ENCODE measurements at regions of chr11 and their contacts with region 1.

Region 1: GRCh38 chr11:57499413-57499982 is 16.0 kb downstream of the SLC43A1 start:
- DNase-seq: peak; percentile 99
- H3K4me3 ChIP-seq: peak overlapping the region; percentile 9 to 43 (median 34)
- H3K27ac ChIP-seq: peak overlapping the region; percentile 77 to 80 (median 80)
- H3K4me1 ChIP-seq: peaks cover 0 to 23% (median 19%) of the 10 kb centered on the region in 4 donors
- H3K27me3 ChIP-seq: no peaks in the 10 kb centered on the region
- CTCF ChIP-seq: no peak
- EP300 ChIP-seq: peak in 1 of 4 donors; percentile 56
- POLR2A ChIP-seq: no peak

Region 2: GRCh38 chr11:57456960-57457642 is 42.4 kb before region 1 on chr11:
- intact Hi-C with region 1: loop called (anchors 5 kb)
- DNase-seq: peak; percentile 94
- H3K4me3 ChIP-seq: no peak overlapping the region
- H3K27ac ChIP-seq: no peak overlapping the region
- H3K4me1 ChIP-seq: peaks cover 0 to 45% (median 42%) of the 10 kb centered on the region in 4 donors
- H3K27me3 ChIP-seq: peaks cover 34 to 60% (median 38%) of the 10 kb centered on the region in 3 donors
- CTCF ChIP-seq: peak; percentile 87 to 99 (median 92)
- EP300 ChIP-seq: no peak
- POLR2A ChIP-seq: no peak

Region 3: DNA sequence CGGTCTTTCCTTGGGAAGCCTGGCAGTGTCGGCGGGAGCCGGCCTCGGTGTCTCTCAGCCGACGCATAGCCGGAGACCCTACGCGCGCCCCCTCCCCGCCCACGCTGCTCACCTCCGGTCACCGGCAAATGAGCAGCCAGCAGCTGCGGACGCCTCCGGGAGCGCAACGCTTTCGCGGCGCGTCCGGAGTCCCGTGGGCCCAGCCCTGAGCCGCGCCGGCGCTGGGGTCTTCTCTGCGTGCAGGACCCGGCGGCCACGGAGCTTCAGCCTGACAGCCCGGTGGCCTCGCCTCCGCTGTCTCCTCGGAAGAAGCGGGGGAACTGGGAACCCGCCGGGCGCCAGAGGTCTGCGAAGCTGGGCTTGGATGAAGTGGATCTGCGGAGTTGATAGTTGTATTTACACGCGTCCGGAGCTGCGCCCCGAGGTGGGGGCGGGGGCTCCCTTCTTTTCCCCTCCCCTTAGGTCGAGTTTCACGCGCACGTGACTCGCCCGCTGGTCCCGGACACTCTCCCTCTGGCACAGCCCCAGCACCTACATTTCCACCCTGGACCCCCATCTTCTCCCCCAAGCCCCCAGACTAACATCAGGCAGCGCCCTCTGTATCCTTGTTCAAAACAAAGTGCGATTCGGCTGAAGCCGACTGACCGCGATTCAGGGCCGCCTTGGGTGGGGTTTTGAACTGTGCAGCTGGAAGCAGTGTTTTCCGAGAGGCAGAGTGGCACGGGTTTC is 16.0 kb after region 1 on chr11 and contains the start of gene SLC43A1:
- intact Hi-C with region 1: loop called (anchors 2 kb)
- DNase-seq: peak; percentile 86
- H3K4me3 ChIP-seq: peak within 1 kb of the TSS; percentile 65 to 82 (median 75)
- H3K27ac ChIP-seq: peak within 1 kb of the TSS; percentile 68 to 79 (median 76)
- H3K4me1 ChIP-seq: peaks cover 0 to 18% (median 17%) of the 10 kb centered on the region in 4 donors
- H3K27me3 ChIP-seq: no peaks in the 10 kb centered on the region
- CTCF ChIP-seq: no peak
- EP300 ChIP-seq: no peak
- POLR2A ChIP-seq: peak in 1 of 2 donors; percentile 10
- total RNA-seq, gene SLC43A1: 19.1 to 32.4 (median 27.4) TPM

Measured in sigmoid colon (tissue), 7 donors.